ENCODE measurements at regions of chr6 and their contacts with region 1.

Region 1: GRCh38 chr6:30489081-30490025 is at the start of gene HLA-E:
- DNase-seq: peak; percentile 75 to 100 (median 87)
- ATAC-seq: peak; percentile 80
- H3K4me3 ChIP-seq: peak within 1 kb of the TSS; percentile 93 to 99
- H3K4me3 Mint-ChIP-seq: peak within 1 kb of the TSS; percentile 99
- H3K27ac ChIP-seq: peak within 1 kb of the TSS; percentile 94 to 96
- H3K27ac Mint-ChIP-seq: peak within 1 kb of the TSS; percentile 98
- H3K4me1 ChIP-seq: peaks cover 31% of the 10 kb centered on the region
- H3K4me1 Mint-ChIP-seq: peaks cover 52% of the 10 kb centered on the region
- H3K27me3 ChIP-seq: no peaks in the 10 kb centered on the region
- H3K27me3 Mint-ChIP-seq: no peaks in the 10 kb centered on the region
- CTCF ChIP-seq: no peak
- total RNA-seq, gene HLA-E: 1,266 to 1,281 TPM

Region 2: GRCh38 chr6:30087876-30088275 is 401.5 kb before region 1 on chr6:
- CTCF ChIA-PET with region 1: no interaction called
- POLR2A ChIA-PET with region 1: no interaction called
- intact Hi-C with region 1: no loop called
- DNase-seq: no peak
- ATAC-seq: no peak
- H3K4me3 ChIP-seq: no peak overlapping the region
- H3K4me3 Mint-ChIP-seq: no peak overlapping the region
- H3K27ac ChIP-seq: no peak overlapping the region
- H3K27ac Mint-ChIP-seq: no peak overlapping the region
- H3K4me1 ChIP-seq: no peaks in the 10 kb centered on the region
- H3K4me1 Mint-ChIP-seq: no peaks in the 10 kb centered on the region
- H3K27me3 ChIP-seq: peaks cover 0 to 8% of the 10 kb centered on the region in 2 experiments
- H3K27me3 Mint-ChIP-seq: peaks cover 52% of the 10 kb centered on the region
- CTCF ChIP-seq: no peak

Region 3: GRCh38 chr6:30463651-30464618 is 25.4 kb before region 1 on chr6:
- CTCF ChIA-PET with region 1: interaction called, 9 read pairs
- POLR2A ChIA-PET with region 1: interaction called, 10 read pairs
- intact Hi-C with region 1: no loop called
- DNase-seq: peak; percentile 34 to 86 (median 69)
- ATAC-seq: peak; percentile 48
- H3K4me3 ChIP-seq: no peak overlapping the region
- H3K4me3 Mint-ChIP-seq: peak overlapping the region; percentile 33
- H3K27ac ChIP-seq: no peak overlapping the region
- H3K27ac Mint-ChIP-seq: no peak overlapping the region
- H3K4me1 ChIP-seq: peaks cover 46% of the 10 kb centered on the region
- H3K4me1 Mint-ChIP-seq: peaks cover 48% of the 10 kb centered on the region
- H3K27me3 ChIP-seq: peaks cover 56 to 78% of the 10 kb centered on the region in 2 experiments
- H3K27me3 Mint-ChIP-seq: peaks cover 76% of the 10 kb centered on the region
- CTCF ChIP-seq: no peak

Region 4: GRCh38 chr6:30508890-30509736 is 19.8 kb after region 1 on chr6:
- CTCF ChIA-PET with region 1: interaction called, 47 read pairs
- POLR2A ChIA-PET with region 1: interaction called, 359 read pairs
- intact Hi-C with region 1: loop called in 1 of 2 experiments (anchors 2 kb)
- DNase-seq: peak in 3 of 9 experiments; percentile 43 to 88 (median 78)
- ATAC-seq: peak; percentile 81
- H3K4me3 ChIP-seq: peak overlapping the region; percentile 24 to 31
- H3K4me3 Mint-ChIP-seq: peak overlapping the region; percentile 62
- H3K27ac ChIP-seq: peak overlapping the region in 1 of 2 experiments; percentile 85
- H3K27ac Mint-ChIP-seq: peak overlapping the region; percentile 82
- H3K4me1 ChIP-seq: peaks cover 68% of the 10 kb centered on the region
- H3K4me1 Mint-ChIP-seq: peaks cover 62% of the 10 kb centered on the region
- H3K27me3 ChIP-seq: no peaks in the 10 kb centered on the region
- H3K27me3 Mint-ChIP-seq: no peaks in the 10 kb centered on the region
- CTCF ChIP-seq: no peak

Region 5: GRCh38 chr6:30533460-30534294 is 44.3 kb after region 1 on chr6:
- CTCF ChIA-PET with region 1: interaction called, 437 read pairs
- POLR2A ChIA-PET with region 1: interaction called, 168 read pairs
- intact Hi-C with region 1: loop called in 1 of 2 experiments (anchors 1 kb)
- DNase-seq: peak in 2 of 9 experiments; percentile 50 to 71
- ATAC-seq: no peak
- H3K4me3 ChIP-seq: peak overlapping the region in 1 of 2 experiments; percentile 28
- H3K4me3 Mint-ChIP-seq: peak overlapping the region; percentile 65
- H3K27ac ChIP-seq: peak overlapping the region in 1 of 2 experiments; percentile 44
- H3K27ac Mint-ChIP-seq: peak overlapping the region; percentile 57
- H3K4me1 ChIP-seq: peaks cover 15% of the 10 kb centered on the region
- H3K4me1 Mint-ChIP-seq: peaks cover 33% of the 10 kb centered on the region
- H3K27me3 ChIP-seq: no peaks in the 10 kb centered on the region
- H3K27me3 Mint-ChIP-seq: no peaks in the 10 kb centered on the region
- CTCF ChIP-seq: no peak

Region 6: DNA sequence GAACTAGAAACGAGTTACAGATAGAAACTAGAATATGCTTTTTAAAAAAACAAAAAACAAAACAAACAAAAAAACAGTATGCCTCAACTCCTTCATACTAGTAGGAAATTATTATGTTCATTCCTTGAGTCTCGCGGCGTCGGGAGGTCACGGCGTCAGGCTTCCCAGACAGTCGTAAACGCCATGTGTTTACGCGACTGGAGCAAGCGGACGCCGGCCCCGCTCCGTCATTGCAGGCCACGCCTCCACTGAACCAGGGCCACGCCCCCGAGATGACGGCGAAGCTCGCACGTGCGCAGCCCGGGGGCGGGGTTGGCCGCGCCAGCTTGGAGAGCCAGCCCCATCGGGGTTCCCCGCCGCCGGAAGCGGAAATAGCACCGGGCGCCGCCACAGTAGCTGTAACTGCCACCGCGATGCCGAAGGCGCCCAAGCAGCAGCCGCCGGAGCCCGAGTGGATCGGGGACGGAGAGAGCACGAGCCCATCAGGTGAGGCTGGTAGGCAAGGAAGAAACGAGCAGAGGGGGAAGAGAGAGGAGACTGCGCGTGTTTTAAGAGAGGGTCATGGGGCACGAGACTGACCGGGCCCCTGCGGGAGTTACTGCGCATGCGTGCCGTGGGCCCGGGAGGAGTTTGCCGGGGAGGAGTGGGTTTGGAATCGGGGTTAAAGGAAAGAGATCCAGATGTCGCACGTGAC is 81.9 kb after region 1 on chr6 and contains the start of gene ABCF1:
- CTCF ChIA-PET with region 1: interaction called, 21 read pairs
- POLR2A ChIA-PET with region 1: interaction called, 9 read pairs
- intact Hi-C with region 1: loop called in 1 of 2 experiments (anchors 1 kb)
- DNase-seq: peak; percentile 99 to 100 (median 100)
- ATAC-seq: peak; percentile 96
- H3K4me3 ChIP-seq: peak within 1 kb of the TSS; percentile 64 to 86
- H3K4me3 Mint-ChIP-seq: peak within 1 kb of the TSS; percentile 98
- H3K27ac ChIP-seq: peak within 1 kb of the TSS; percentile 90 to 98
- H3K27ac Mint-ChIP-seq: peak within 1 kb of the TSS; percentile 99
- H3K4me1 ChIP-seq: peaks cover 54% of the 10 kb centered on the region
- H3K4me1 Mint-ChIP-seq: peaks cover 69% of the 10 kb centered on the region
- H3K27me3 ChIP-seq: no peaks in the 10 kb centered on the region
- H3K27me3 Mint-ChIP-seq: no peaks in the 10 kb centered on the region
- CTCF ChIP-seq: no peak
- total RNA-seq, gene ABCF1: 121 to 130 TPM

Region 7: DNA sequence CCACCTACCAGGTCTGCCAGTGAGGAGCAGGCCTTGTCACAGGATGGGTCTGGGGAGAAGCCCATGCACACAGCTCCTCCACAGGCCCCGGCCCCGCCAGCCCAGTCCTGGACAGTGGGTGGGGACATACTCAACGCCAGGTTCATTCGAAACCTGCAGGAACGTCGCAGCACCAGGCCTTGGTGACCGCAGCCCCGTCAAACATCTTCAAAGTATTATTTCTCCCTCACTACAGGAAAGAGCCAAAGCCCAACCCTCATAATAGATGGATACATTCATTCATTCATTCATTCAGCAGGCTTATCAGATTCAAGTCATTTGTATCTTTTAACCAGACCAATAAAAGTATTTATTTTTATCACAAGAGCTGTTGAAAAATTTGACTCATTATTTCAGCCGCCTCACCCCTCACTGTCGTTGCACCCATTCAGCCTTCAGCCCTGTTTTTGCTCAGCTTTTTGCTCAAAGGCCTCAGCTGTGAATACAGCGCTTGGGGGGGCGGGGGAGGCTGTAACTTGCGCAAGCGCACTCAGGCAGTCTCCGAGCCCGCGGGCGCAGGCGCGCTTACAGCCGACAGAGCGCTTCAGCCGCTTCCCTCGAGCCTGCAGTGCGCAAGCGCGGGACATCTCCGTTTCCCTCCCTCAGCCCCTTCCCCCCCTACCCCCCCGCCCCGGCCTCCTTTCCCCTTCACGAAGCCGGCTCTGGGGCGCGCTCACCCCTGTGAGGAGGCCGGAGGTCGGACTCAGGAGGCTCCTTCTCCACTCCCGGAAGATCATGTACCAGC is 157.3 kb after region 1 on chr6 and contains the start of gene C6orf136:
- CTCF ChIA-PET with region 1: interaction called, 3 read pairs
- POLR2A ChIA-PET with region 1: interaction called, 3 read pairs
- intact Hi-C with region 1: loop called in 1 of 2 experiments (anchors 1 kb)
- DNase-seq: peak; percentile 84 to 98 (median 92)
- ATAC-seq: peak; percentile 83
- H3K4me3 ChIP-seq: peak within 1 kb of the TSS; percentile 91 to 93
- H3K4me3 Mint-ChIP-seq: peak within 1 kb of the TSS; percentile 86
- H3K27ac ChIP-seq: peak within 1 kb of the TSS; percentile 80 to 92
- H3K27ac Mint-ChIP-seq: peak within 1 kb of the TSS; percentile 92
- H3K4me1 ChIP-seq: peaks cover 20% of the 10 kb centered on the region
- H3K4me1 Mint-ChIP-seq: peaks cover 30% of the 10 kb centered on the region
- H3K27me3 ChIP-seq: no peaks in the 10 kb centered on the region
- H3K27me3 Mint-ChIP-seq: no peaks in the 10 kb centered on the region
- CTCF ChIP-seq: no peak
- total RNA-seq, gene C6orf136: 31.4 to 36.0 TPM